ENCODE measurements at regions of chr2 and their contacts with region 1.

Region 1: GRCh38 chr2:216426938-216427337 is 14.7 kb downstream of the SMARCAL1 start:
- ATAC-seq: peak in 7 of 8 experiments; percentile 27 to 99 (median 68)
- H3K4me3 ChIP-seq: no peak overlapping the region
- H3K27ac ChIP-seq: no peak overlapping the region
- H3K4me1 ChIP-seq: no peaks in the 10 kb centered on the region

Region 2: GRCh38 chr2:216139884-216140283 is 287.1 kb before region 1 on chr2:
- in situ Hi-C with region 1: loop called in 1 of 9 experiments (anchors 25 kb)
- ATAC-seq: no peak
- H3K4me3 ChIP-seq: no peak overlapping the region
- H3K27ac ChIP-seq: no peak overlapping the region
- H3K4me1 ChIP-seq: no peaks in the 10 kb centered on the region

Region 3: DNA sequence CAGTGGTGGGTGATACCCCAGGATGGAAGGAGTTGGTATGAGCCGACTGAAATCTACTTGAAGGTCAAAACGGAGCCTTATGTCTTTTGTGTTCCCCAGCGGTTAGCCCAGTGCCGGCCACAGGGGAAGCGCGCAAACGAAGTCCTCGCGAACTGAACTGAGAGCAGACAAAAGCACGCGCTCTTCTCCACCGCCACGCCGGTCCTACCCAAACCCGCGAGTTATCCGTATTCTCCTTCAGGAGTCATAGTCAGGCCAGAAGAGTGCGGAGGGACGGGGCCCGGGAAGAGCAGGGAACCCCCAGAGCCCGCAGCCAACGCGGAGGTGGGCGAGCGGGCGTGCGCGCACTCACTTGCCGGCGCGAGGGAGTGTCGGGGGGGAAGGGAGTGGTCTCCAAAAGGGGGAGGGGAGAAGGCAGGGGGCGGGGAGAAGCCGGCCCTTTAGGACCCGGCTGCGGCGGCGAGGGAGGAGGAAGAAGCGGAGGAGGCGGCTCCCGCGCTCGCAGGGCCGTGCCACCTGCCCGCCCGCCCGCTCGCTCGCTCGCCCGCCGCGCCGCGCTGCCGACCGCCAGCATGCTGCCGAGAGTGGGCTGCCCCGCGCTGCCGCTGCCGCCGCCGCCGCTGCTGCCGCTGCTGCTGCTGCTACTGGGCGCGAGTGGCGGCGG is 206.1 kb after region 1 on chr2 and contains the start of gene IGFBP2:
- in situ Hi-C with region 1: no loop called
- ATAC-seq: peak in 7 of 8 experiments; percentile 28 to 49 (median 33)
- H3K4me3 ChIP-seq: peak within 1 kb of the TSS; percentile 53 to 88 (median 73)
- H3K27ac ChIP-seq: peak within 1 kb of the TSS in 1 of 2 donors; percentile 61
- H3K4me1 ChIP-seq: peaks cover 10 to 19% of the 10 kb centered on the region in 2 donors
- total RNA-seq, gene IGFBP2: 1.2 to 825 (median 454) TPM

Region 4: GRCh38 chr2:216643986-216644659 is 217.2 kb after region 1 on chr2:
- in situ Hi-C with region 1: no loop called
- ATAC-seq: peak in 5 of 8 experiments; percentile 5 to 74 (median 42)
- H3K4me3 ChIP-seq: no peak overlapping the region
- H3K27ac ChIP-seq: peak overlapping the region in 1 of 2 donors; percentile 48
- H3K4me1 ChIP-seq: peaks cover 16 to 41% of the 10 kb centered on the region in 2 donors

Measured in motor neuron (in vitro differentiated cells).